AG04449 (cell line): ENCODE measurements at regions of chr21 and their contacts with region 1.

Region 1: DNA sequence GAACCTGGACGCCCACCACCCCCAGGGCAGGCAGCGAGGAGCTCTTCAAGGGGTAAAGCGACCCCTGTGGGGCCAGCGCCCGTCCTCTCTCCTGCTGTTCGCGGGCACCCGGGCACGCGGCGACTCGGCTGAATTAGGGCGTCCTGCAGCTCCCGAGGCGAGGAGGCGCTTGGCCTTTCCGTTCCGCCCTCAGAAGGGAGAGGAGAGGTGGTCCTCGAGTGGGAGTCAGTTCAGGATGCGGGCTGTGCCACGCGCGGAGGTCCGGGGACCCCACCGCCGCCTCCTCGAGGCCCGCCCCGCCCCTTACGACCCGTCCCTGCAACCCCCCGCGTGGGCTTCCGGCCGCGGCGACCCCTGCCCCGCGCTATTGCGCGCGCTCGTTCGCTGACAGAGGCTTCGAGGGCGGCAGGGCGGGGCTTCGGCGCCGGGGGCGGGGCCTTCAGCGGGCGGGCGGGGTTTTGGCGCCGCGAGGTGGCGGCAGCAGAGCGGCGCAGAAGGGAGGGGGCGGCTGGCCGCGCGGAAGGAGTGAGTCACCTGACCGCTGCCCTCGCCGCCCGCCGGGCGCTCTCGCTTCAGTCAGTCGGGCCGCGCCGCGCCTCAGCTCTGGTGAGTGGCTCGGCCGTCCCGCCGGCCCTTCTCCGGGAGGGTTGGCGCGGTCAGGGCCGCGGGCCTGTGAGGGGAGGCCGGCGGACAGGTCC is at the start of gene BACH1:
- DNase-seq: peak; percentile 52
- H3K4me3 ChIP-seq: peak within 1 kb of the TSS; percentile 96
- CTCF ChIP-seq: peak; percentile 62

Region 2: GRCh38 chr21:29073222-29074006 is 225.1 kb before region 1 on chr21 and contains the start of gene CCT8:
- CTCF ChIA-PET with region 1: interaction called, 3 read pairs
- POLR2A ChIA-PET with region 1: interaction called, 11 read pairs
- DNase-seq: peak; percentile 97
- H3K4me3 ChIP-seq: peak within 1 kb of the TSS; percentile 98
- CTCF ChIP-seq: no peak

Region 3: DNA sequence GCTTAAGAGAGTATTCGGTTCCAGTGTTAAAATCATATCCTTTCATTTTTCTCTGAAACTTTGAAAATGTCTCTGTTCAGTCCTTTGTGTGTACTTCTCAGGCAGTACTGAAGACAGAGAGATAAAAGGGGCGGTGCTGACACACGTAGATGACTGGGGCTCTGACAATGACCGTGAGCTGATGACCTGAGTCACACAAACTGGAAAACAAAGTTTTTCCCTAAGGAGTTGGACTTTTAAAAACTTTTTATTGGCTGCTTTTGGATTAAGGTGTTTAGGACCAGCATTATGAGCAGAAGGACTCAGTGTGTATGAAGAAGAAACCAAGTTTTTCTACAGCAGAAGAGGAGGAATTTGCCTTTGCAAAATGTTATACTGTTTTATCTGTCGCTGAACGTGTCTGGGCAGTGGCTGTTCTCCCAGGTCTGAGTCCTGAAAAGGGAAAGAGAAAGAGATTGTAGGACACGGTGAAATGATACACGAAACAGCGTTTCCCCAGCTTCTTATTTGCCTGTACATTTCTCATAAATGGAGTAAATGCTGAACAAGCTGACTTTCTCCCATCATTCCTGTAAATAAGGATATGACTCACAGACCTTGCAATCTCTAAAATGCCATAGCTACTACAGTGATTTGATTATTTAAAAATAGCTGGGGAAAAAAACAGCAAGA is 116.6 kb before region 1 on chr21:
- CTCF ChIA-PET with region 1: interaction called, 3 read pairs
- POLR2A ChIA-PET with region 1: interaction called, 10 read pairs
- DNase-seq: peak; percentile 83
- H3K4me3 ChIP-seq: peak overlapping the region; percentile 56
- CTCF ChIP-seq: no peak

Region 4: DNA sequence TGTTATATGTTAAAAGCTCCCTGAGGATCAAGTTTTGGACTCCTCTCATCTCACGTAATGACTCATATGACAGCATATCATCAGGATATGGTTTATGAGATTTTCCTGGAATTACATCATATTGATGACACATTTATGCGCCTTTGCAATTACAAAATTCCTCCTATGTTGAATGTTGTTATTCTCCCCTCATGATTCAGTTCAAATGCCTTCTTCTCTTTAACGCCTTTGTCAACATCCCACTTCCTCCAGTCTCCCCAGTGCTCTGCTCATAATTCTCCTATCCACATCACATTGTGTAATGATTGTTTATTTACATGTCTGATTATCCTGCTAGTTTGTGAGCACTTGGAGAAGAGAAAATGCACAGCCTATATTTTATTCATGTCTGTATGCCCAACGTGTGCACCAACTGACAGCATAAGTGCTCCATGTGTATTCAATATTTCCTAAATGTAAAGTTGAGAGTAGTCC is 80.6 kb before region 1 on chr21:
- CTCF ChIA-PET with region 1: interaction called, 3 read pairs
- POLR2A ChIA-PET with region 1: interaction called, 23 read pairs
- DNase-seq: peak; percentile 98
- H3K4me3 ChIP-seq: no peak overlapping the region
- CTCF ChIP-seq: no peak

Region 5: DNA sequence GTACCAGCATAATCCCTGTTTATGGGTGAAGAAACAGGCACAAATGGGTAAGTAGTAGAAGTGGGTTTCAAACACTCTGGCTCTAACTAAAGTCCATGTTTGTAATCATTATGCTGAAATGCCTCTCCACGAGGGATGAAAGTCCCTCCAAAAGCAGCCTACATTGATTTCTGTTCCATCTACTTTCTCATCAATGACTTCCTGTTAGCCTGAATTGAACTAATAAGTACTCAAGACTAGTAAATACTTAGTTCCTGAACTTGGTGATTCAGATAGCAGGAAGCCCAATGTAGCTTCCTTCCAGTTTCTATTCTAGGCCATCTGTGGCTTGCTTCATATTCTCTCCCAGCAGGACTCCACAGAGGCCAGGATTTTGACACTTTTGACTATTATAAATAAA is 11.1 kb before region 1 on chr21:
- CTCF ChIA-PET with region 1: interaction called, 13 read pairs
- POLR2A ChIA-PET with region 1: interaction called, 5 read pairs
- DNase-seq: no peak
- H3K4me3 ChIP-seq: no peak overlapping the region
- CTCF ChIP-seq: no peak

Region 6: GRCh38 chr21:29342363-29342957 is 44.0 kb after region 1 on chr21:
- CTCF ChIA-PET with region 1: interaction called, 7 read pairs
- POLR2A ChIA-PET with region 1: interaction called, 11 read pairs
- DNase-seq: peak; percentile 95
- H3K4me3 ChIP-seq: no peak overlapping the region; the same call in 1 of the 2 replicates
- CTCF ChIP-seq: peak; percentile 13